ENCODE measurements at regions of chr17 and their contacts with region 1.

Region 1: DNA sequence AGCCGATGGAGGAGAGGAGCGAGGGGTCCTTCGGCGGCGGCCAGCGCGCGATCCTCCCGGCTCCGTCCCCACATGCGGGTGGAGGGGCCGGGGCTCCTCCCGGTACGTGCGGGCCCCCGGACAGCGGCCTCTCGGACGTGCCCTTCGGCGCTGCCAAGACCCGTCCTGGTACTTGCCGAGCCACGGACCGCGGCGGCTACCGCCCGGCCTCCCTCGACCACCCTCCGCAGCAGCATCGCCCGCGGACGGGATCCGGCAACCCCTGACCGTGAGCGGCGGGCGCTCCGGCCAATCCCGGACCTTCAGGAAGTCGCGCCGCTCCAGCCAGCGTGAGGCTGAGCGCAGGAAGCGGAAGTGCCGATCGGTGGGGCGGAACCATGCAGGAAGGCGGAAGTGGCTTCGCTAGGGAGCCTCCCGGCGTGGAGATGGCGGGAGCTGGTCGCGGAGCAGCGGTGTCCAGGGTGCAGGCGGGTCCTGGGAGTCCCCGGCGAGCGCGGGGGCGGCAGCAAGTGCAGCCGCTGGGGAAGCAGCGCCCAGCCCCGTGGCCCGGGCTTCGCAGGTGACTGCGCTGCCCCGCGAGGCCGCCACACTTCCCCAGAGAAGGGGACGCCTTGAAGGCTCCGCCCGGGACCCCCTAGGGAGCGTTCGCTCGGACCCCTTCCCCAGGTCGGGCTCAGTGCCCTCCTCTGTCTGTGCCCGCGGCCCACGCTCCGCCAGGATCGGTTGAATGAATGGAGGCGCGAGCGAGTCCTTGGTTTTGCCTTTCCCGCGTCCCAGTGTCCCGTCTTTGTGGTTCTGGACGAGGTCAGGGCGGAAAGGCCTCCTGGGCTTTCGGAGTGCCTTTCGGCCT is at the starts of genes CCDC137 and OXLD1:
- DNase-seq: peak; percentile 99
- CTCF ChIP-seq: no peak

Region 2: DNA sequence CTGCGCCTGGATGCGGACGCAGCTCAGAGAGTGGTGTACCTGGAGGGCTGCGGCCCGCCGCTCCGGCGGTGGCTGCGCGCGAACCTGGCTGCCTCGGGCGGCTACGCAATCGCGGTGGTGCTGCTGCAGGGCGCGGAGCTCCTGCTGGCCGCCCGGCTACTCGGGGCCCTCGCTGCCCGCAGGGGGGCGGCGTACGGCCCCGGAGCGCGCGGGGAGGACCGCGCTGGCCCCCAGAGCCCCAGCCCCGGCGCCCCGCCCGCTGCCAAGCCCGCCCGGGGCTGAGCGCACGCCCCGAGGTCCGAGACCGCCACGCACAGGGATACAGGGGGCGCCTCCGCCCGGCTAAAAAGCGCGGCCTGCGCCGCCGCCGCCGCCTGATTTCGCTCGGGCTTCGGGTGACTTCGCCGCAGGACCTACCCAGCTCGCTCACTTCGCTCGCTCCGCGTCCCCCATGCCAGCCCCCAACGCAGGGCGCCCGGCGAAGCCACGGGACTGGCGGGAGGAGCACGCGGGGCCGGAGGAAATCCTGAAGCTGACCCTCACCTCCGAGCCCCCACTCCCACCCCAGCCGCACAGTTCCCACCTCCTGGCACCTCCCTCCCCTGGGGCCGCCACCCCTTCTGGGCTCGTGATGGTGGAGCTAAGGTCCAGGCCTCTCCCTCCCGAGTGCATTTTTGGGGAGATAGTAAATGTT is 18.4 kb before region 1 on chr17:
- CTCF ChIA-PET with region 1: no interaction called
- POLR2A ChIA-PET with region 1: no interaction called
- DNase-seq: no peak
- CTCF ChIP-seq: no peak

Region 3: DNA sequence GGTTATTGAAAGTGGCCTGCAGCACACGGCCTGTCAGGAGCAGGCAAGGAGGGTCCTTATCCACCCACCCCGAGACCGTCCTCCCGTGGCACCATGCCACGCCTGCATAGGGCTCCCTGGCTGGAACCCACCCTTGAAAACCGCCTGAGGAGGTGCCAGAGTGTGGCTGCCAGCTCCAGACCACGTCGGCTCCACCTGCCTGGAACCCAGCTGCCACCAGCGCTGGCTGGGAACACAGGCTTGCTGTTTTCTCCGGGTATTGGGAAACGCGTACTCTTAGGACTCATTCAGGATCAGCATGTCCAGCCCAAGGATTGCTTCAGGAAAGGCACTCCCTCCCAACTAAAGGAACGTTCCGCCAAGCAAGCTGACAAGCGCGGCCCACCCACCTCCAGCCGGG is 10.3 kb after region 1 on chr17:
- CTCF ChIA-PET with region 1: interaction called, 16 read pairs
- POLR2A ChIA-PET with region 1: no interaction called
- DNase-seq: no peak
- CTCF ChIP-seq: no peak

Measured in GM10248 (cell line).